Ascending aorta (tissue), 2 donors: ENCODE measurements at regions of chr2 and their contacts with region 1.

Region 1: DNA sequence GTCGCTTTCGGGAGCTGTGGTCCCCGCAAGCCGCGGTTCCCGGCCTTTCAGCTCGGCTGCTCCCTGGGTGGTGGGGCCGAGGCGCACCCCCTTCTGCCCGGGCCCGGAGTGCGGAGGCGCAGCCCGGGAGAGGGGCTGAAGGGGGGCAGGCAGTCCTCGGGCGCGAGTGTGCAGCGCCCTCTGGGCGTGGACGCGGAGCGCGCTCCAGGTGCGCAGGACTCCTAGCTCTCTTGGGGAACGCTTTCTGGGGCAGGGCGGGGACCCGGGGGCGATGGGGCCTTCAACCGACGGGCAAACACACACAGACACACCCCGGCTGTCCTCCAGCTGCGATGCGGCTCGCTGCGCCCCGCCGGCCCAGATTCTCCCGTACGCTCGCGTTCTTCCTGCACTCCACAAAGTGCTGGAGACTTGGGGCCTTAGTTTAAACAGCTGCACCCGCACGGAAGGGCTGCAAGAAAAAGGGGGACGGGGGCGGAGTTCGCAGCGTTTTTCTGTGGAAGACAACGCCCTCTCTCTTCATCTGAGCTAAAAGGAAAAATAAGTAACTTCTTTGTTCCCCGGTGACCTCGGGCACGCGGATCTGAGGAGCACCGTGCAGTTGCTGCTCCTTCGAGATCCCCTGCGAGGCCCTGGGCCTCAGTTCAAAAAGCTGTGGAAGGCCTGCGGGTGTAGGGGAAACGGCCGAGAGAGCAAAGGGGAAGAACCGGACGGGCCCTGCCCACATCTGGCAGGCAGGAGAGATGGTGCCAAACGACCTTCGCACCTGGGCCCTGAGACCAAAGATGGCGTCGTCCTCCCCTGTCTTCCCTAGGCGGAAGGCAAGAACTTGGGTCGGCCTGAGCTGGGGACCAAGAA is 593 bp upstream of the SDC1 start:
- DNase-seq: peak in 1 of 2 donors; percentile 55
- H3K4me3 ChIP-seq: peak overlapping the region; percentile 78 to 94
- H3K27ac ChIP-seq: no peak overlapping the region
- H3K4me1 ChIP-seq: peaks cover 8 to 14% of the 10 kb centered on the region in 2 donors
- H3K27me3 ChIP-seq: no peaks in the 10 kb centered on the region
- CTCF ChIP-seq: peak; percentile 17 to 68 (median 27)

Region 2: GRCh38 chr2:20052861-20053281 is 172.7 kb before region 1 on chr2:
- intact Hi-C with region 1: no loop called
- DNase-seq: peak; percentile 27 to 87
- H3K4me3 ChIP-seq: peak overlapping the region; percentile 73 to 81
- H3K27ac ChIP-seq: peak overlapping the region; percentile 96
- H3K4me1 ChIP-seq: peaks cover 0 to 18% of the 10 kb centered on the region in 2 donors
- H3K27me3 ChIP-seq: no peaks in the 10 kb centered on the region
- CTCF ChIP-seq: no peak

Region 3: DNA sequence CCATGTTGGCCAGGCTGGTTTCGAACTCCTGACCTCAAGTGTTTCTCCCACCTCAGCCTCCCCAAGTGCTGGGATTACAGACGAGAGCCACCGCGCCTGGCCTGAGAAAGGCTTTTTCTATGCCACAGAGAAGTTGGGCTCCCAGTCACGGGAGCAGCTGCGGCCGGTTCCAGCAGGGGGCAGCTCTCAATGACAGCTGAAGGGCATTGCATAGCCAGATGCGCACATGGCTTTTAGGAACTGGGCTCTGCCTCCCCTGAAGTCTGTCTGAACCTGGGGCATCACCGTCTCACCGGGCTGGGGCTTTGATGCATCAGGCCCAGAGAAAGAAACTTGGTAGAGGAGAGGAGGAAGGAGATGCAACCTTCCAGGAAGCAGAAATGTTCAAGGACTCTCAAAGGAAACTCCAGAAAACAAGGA is 89.9 kb before region 1 on chr2:
- intact Hi-C with region 1: loop called (anchors 2 kb)
- DNase-seq: peak in 1 of 2 donors; percentile 77
- H3K4me3 ChIP-seq: no peak overlapping the region
- H3K27ac ChIP-seq: no peak overlapping the region
- H3K4me1 ChIP-seq: no peaks in the 10 kb centered on the region
- H3K27me3 ChIP-seq: no peaks in the 10 kb centered on the region
- CTCF ChIP-seq: peak; percentile 44 to 76 (median 64)

Region 4: DNA sequence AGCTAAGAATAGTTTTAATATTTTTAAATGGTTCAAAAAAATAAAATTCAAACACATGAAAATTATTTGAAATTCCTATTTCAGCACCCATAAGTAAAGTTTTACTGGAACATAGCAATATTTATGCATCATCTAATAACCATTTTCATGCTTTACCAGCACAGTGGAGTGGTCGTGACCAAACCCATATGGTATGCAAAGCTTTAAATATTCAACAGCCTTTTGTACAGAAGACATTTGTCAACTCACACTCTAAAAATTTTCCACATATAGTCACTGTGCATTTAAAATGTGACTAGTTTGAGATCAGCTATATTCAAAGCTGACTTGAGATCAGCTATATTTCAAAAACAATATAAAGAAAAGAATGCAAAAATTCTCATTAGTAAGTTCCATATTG is 78.9 kb after region 1 on chr2:
- intact Hi-C with region 1: no loop called
- DNase-seq: no peak
- H3K4me3 ChIP-seq: no peak overlapping the region
- H3K27ac ChIP-seq: no peak overlapping the region
- H3K4me1 ChIP-seq: peaks cover 0 to 2% of the 10 kb centered on the region in 2 donors
- H3K27me3 ChIP-seq: no peaks in the 10 kb centered on the region
- CTCF ChIP-seq: no peak

Region 5: DNA sequence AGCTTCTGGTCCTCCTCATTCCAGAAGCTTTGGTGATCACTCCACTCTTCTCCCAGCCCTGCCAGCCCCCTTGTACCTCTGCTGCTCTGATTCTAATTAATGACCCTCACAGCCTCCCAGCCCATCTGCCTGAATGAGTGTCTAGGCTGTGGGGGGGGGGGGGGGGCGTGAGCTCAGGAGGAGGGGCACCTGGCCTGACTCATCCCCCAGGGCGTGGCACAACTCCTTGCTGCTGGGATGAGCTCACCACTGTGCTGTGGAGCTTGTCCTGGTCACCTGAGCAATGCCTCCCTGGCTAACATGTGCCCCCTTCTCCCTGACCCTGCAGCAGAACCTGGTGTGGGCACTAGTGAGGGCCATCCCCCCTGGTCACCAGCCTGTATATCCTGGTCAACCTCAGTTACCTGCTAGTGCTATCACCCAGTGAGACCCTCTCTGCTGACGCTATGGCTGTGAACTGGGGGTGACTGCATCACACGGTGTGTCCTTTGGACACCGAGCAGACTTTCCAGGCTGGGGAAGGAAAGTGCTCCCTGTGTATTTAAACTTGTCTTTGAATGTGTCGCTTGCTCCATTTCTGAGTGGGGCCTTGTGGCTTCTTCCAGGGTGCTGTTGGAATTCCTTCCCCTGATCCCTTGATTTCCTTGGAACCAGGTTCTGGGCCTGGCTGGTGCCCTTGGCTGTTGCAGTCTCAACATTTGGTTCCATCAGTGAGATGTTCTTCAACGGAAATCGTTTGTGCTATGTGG is 166.6 kb after region 1 on chr2:
- intact Hi-C with region 1: no loop called
- DNase-seq: no peak
- H3K4me3 ChIP-seq: no peak overlapping the region
- H3K27ac ChIP-seq: no peak overlapping the region
- H3K4me1 ChIP-seq: no peaks in the 10 kb centered on the region
- H3K27me3 ChIP-seq: no peaks in the 10 kb centered on the region
- CTCF ChIP-seq: no peak